ENCODE measurements at regions of chr1 and their contacts with region 1.

Region 1: DNA sequence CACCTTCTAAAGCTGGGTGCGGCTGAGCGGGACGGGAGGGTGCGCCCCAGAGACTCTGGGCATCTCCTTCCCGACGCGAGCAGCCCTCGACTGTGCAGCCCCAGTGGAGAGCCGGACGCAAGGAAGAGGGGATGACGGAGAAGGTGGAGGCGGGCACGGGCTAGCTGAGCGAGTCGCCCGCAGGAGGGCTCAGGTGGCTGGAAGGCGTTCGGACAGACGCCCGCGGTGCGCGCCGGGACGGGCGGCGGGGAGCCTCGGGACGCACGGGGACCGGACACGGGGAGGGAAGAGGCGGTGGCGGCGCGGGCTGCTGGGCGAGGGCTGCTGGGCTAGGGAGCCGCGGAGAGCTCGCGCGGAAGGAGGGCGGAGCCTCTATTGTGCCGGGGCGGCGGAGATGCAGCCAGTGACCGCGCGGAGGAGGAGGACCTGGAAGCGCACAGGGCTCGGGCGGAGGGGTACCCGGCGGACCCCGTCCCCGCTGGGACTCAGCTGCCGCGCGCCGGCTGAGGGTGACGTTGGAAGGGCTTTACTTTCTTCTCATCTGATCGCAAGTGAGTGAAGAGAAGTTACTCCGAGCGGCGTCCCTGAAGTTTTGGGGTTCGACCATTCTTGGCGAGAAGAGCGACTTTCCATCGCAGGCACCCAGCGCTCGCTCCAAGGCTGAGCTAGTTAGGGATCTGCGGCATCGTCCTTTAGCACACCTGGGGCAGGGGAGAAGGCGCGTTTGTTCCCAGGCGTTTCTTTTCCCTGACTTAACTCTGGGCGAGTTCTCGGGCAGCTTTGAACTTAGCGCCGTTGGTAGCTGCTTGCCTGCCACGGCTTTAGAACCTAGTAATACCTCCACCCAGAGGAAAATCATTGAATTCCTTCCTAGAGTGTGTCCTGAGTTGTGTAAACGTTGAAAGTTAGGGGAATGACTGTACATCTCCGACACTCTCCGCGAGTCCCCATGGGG is at the start of gene OLFML2B:
- DNase-seq: peak; percentile 93
- total RNA-seq, gene OLFML2B: 30.8 to 49.7 TPM

Region 2: GRCh38 chr1:161864577-161864976 is 159.2 kb before region 1 on chr1:
- intact Hi-C with region 1: loop called in 1 of 2 experiments (anchors 10 kb)
- DNase-seq: no peak

Region 3: GRCh38 chr1:161962091-161962887 is 61.5 kb before region 1 on chr1:
- intact Hi-C with region 1: loop called in 1 of 2 experiments (anchors 10 kb)
- DNase-seq: no peak